Esophagus squamous epithelium (tissue), 5 donors: ENCODE measurements at regions of chr9 and their contacts with region 1.

Region 1: GRCh38 chr9:113446323-113446740 is 17.2 kb upstream of the RGS3 start:
- DNase-seq: no peak
- H3K4me3 ChIP-seq: no peak overlapping the region
- H3K27ac ChIP-seq: no peak overlapping the region
- H3K4me1 ChIP-seq: peaks cover 0 to 5% (median 0%) of the 10 kb centered on the region in 3 donors
- H3K27me3 ChIP-seq: no peaks in the 10 kb centered on the region
- CTCF ChIP-seq: peak; percentile 57 to 78 (median 64)
- POLR2A ChIP-seq: no peak

Region 2: GRCh38 chr9:113139225-113139829 is 307.0 kb before region 1 on chr9:
- intact Hi-C with region 1: no loop called
- DNase-seq: no peak
- H3K4me3 ChIP-seq: no peak overlapping the region
- H3K27ac ChIP-seq: no peak overlapping the region
- H3K4me1 ChIP-seq: no peaks in the 10 kb centered on the region
- H3K27me3 ChIP-seq: peaks cover 0 to 16% (median 0%) of the 10 kb centered on the region in 4 donors
- CTCF ChIP-seq: no peak
- POLR2A ChIP-seq: no peak

Region 3: GRCh38 chr9:113657703-113658544 is 211.6 kb after region 1 on chr9:
- intact Hi-C with region 1: loop called (anchors 2 kb)
- DNase-seq: no peak
- H3K4me3 ChIP-seq: no peak overlapping the region
- H3K27ac ChIP-seq: no peak overlapping the region
- H3K4me1 ChIP-seq: peaks cover 0 to 30% (median 10%) of the 10 kb centered on the region in 3 donors
- H3K27me3 ChIP-seq: peaks cover 0 to 39% (median 0%) of the 10 kb centered on the region in 4 donors
- CTCF ChIP-seq: peak; percentile 85 to 96 (median 94)
- POLR2A ChIP-seq: peak in 1 of 4 donors; percentile 8